ENCODE measurements at regions of chr2 and their contacts with region 1.

Region 1: GRCh38 chr2:11129598-11130449 is 25.4 kb upstream of the SLC66A3 start:
- DNase-seq: no peak
- H3K4me3 ChIP-seq: peak overlapping the region in 2 of 3 experiments; percentile 16 to 35
- H3K27ac ChIP-seq: no peak overlapping the region
- H3K4me1 ChIP-seq: peaks cover 28% of the 10 kb centered on the region
- H3K27me3 ChIP-seq: no peaks in the 10 kb centered on the region
- CTCF ChIP-seq: peak; percentile 22 to 65

Region 2: DNA sequence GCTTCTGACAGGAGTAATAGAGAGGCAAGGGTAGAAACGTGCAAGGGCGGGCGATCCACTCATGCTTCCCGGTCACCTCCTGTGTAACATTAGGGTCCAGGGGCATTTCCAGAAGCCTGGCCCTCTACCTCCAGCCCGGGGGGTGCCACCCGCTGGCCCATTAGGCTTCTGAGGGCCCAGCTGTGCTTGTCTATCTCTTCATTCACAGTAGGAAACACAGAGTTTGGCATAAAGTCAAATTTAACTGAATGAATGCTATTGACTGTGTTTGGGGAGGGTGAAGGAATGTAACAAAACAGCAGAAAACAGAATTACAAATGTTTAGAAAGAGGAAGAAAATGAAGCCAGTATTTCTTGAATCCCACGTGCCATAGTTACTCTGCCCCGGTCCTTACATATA is 87.0 kb before region 1 on chr2:
- CTCF ChIA-PET with region 1: no interaction called
- dilution Hi-C with region 1: no loop called
- in situ Hi-C with region 1: no loop called
- intact Hi-C with region 1: no loop called
- DNase-seq: no peak
- H3K4me3 ChIP-seq: no peak overlapping the region
- H3K27ac ChIP-seq: no peak overlapping the region
- H3K4me1 ChIP-seq: no peaks in the 10 kb centered on the region
- H3K27me3 ChIP-seq: no peaks in the 10 kb centered on the region
- CTCF ChIP-seq: no peak

Region 3: DNA sequence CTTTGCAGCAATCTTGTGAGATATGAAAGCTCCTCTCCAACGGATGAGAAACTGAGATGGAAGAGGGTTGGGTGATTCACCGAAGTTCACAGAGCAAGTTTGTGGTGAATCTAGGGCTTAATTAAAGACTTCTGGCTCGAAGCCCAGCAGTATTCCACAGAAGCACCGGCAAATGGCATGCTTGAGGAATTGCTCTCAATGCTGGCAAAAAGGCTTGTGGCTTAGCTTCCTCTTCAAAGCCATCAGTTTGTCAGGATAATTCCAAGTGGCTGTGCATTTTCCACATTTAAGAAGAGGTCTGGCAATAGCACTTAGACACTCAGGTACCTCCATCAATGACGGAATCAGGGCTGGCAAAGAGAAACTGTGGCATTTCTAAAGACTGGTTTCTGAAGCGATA is 73.2 kb before region 1 on chr2:
- CTCF ChIA-PET with region 1: no interaction called
- dilution Hi-C with region 1: no loop called
- in situ Hi-C with region 1: no loop called
- intact Hi-C with region 1: no loop called
- DNase-seq: peak; percentile 81
- H3K4me3 ChIP-seq: no peak overlapping the region
- H3K27ac ChIP-seq: no peak overlapping the region
- H3K4me1 ChIP-seq: peaks cover 6% of the 10 kb centered on the region
- H3K27me3 ChIP-seq: peaks cover 7% of the 10 kb centered on the region
- CTCF ChIP-seq: no peak

Region 4: DNA sequence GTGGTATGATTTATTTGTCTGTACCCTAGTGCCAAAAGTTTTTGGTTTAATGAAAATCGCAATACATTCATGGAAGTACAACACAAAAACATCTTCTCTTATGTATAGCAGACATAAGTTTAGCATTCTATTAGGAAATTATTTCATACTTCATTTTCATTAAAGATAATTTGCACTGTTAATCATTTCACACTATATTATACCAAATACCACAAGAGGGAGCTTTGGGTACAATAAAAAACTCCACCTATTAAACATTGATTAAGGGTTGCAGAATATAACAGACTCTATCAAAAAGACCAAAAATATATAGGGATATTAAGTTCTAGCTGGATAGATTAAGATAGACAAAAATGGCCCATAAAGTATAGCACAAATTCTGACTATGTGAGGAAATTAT is 104.5 kb after region 1 on chr2:
- CTCF ChIA-PET with region 1: no interaction called
- dilution Hi-C with region 1: no loop called
- in situ Hi-C with region 1: no loop called
- intact Hi-C with region 1: loop called (anchors 5 kb)
- DNase-seq: no peak
- H3K4me3 ChIP-seq: no peak overlapping the region
- H3K27ac ChIP-seq: no peak overlapping the region
- H3K4me1 ChIP-seq: no peaks in the 10 kb centered on the region
- H3K27me3 ChIP-seq: no peaks in the 10 kb centered on the region
- CTCF ChIP-seq: peak; percentile 34 to 39

Region 5: DNA sequence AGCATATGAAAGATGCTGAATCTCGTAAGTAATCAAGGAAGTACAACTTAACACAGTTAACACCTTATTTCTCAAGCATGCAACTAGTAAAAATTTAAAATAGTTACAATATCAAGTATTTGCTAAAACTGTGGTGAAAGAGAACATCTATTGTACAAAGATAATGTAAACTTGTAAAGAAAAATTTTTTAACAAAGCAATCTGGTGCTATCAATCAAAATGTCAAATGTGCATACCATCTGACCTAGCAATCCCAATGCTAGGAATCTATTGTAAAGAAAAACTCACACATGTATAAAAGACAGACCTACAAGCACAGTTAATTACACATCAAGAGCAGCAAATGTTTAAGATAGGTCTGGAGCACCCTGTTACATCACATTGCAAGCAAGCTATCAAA is 115.5 kb after region 1 on chr2:
- CTCF ChIA-PET with region 1: no interaction called
- dilution Hi-C with region 1: no loop called
- in situ Hi-C with region 1: no loop called
- intact Hi-C with region 1: no loop called
- DNase-seq: no peak
- H3K4me3 ChIP-seq: no peak overlapping the region
- H3K27ac ChIP-seq: no peak overlapping the region
- H3K4me1 ChIP-seq: peaks cover under 1% of the 10 kb centered on the region
- H3K27me3 ChIP-seq: no peaks in the 10 kb centered on the region
- CTCF ChIP-seq: no peak

Region 6: DNA sequence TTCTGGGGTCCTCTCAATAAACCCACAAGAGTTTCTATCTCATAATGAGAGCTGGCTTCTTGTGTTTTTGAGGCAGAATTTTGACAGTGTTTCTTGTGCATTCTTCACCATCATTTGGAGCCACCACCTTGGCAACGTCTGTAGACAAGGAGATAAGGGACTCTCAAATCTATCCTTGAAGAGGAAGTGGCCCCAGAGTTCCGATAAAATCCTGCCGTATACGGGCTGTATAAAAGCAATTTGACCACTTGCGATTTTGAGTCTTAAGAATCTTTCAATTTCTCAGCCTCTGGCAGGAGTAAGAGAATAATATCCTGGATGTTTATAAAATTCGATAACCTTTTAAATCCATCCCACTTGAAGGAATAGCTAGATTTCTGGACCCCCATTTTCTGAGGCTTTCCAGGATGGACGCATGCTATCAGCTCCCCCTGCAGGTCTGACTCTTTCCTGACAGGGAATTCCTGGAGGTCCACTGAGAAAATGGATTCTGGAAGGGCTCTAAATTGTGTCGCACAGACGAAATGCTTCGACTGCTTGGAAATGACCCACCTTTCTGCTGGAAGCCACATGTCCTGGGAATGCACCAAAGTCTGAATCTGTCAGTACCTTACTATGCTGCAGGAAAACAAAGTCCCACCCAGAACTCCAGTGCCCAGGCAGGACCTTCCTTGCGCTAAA is 282.1 kb after region 1 on chr2:
- CTCF ChIA-PET with region 1: interaction called, 5 read pairs
- dilution Hi-C with region 1: no loop called
- in situ Hi-C with region 1: no loop called
- intact Hi-C with region 1: loop called (anchors 1 kb)
- DNase-seq: no peak
- H3K4me3 ChIP-seq: no peak overlapping the region
- H3K27ac ChIP-seq: no peak overlapping the region
- H3K4me1 ChIP-seq: no peaks in the 10 kb centered on the region
- H3K27me3 ChIP-seq: no peaks in the 10 kb centered on the region
- CTCF ChIP-seq: peak; percentile 72 to 84

Region 7: GRCh38 chr2:11477994-11478393 is 348.2 kb after region 1 on chr2:
- CTCF ChIA-PET with region 1: interaction called, 5 read pairs
- dilution Hi-C with region 1: no loop called
- in situ Hi-C with region 1: no loop called
- intact Hi-C with region 1: loop called (anchors 2 kb)
- DNase-seq: peak; percentile 64
- H3K4me3 ChIP-seq: no peak overlapping the region
- H3K27ac ChIP-seq: no peak overlapping the region
- H3K4me1 ChIP-seq: peaks cover 5% of the 10 kb centered on the region
- H3K27me3 ChIP-seq: peaks cover 10% of the 10 kb centered on the region
- CTCF ChIP-seq: peak; percentile 73 to 87

Measured in mammary epithelial cell (primary cell).